ENCODE measurements at regions of chr19 and their contacts with region 1.

Region 1: DNA sequence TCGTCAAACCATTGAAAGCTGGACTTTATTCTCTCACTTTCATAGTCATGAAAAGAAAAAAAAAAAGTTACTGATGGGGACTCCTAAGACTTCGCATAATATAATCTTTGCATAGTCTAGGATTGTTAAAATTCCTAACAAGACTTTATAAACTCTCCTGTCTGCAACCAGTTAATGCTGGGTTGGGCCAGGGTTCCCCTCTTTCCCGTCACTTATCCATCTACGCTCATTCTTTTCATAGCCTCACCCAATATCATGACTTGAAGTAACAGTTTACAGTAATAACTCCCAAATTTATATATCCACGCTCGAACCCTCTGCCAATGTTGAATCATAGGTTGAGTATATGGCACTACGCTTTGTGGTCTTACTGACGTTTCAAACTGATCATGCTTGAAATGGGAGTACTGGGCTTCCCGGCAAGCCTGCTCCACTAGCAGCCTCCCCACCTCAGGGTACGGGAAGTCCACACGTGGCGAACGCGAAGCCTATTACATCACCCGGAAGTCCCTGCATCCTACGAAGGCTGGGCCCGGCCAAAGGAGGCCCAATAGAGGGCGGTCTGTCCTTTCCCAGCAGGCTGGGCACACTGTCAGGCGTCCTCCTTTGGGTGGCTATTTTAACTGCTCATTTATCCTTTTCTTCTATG is 743 bp upstream of the ZNF460 start:
- DNase-seq: peak; percentile 94
- ATAC-seq: peak; percentile 97

Region 2: GRCh38 chr19:57191141-57192076 is 88.1 kb before region 1 on chr19 and contains the start of gene ZNF264:
- intact Hi-C with region 1: loop called (anchors 5 kb)
- DNase-seq: peak; percentile 96
- ATAC-seq: peak; percentile 98
- total RNA-seq, gene ZNF264: 16.5 TPM

Region 3: DNA sequence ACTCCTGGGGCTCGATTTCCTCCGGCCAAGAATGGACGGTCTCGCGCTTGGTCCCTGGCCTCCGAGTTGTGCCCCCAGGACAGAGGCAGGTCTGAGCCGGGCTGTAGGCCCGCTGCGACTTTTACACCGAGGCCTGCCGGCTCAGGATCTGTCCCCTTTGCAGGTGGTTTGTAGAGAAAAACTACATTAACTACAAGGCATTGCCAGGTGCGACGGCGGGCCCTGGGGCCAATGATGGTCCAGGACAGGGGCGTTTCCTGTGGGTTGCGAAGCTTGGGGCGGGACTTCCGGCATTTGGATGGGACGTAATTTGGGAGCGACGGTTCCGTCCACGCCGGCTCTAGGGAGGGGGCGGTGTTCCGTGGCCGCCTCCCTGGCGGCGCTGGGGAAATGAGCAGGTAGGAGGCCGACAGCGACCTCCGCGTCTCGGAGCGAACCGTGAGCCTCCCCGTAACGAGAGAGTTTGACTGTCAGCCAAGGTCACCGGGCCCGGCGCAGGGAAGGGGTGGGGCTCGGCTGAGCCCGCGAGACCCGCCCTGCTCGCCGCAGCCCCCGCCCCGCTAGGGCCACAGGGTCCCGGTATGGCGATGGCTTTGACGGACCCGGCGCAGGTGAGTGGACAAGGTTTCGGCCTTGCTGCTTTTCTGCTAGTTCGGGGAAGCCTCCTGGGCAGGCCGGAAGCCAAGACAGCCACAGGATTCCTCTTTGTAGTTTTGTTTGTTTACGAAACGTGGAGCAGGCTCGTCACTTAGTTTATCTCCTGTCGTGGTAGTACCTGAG is 39.0 kb before region 1 on chr19 and contains the start of gene ZNF805:
- intact Hi-C with region 1: loop called (anchors 1 kb)
- DNase-seq: peak; percentile 97
- ATAC-seq: peak; percentile 100
- total RNA-seq, gene ZNF805: 9.7 TPM

Region 4: DNA sequence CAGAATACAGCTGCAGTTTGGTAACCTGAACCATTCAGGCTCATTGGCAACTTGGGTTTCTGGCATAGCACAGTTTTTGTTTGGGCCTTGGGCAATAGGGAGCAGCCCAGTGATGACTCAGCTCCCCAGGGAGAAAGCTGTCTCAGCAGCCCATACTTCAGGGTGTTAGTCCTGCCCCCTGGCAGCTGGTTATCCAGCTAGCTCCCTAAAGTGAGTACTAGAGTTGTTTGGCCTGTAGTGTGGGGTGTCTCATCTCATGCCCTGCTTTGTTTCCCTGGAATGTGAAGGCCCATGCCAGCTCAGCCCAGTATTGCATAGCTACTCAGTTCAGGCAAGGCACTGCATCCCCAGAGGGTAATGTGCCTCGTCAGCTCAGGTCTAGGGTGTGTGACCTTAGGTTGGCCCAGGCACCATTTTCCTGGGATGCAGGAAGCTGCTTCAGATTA is 22.5 kb after region 1 on chr19:
- intact Hi-C with region 1: no loop called
- DNase-seq: no peak
- ATAC-seq: peak; percentile 28

Region 5: GRCh38 chr19:57320180-57321084 is 40.9 kb after region 1 on chr19 and contains the start of gene ZNF543:
- intact Hi-C with region 1: loop called (anchors 2 kb)
- DNase-seq: peak; percentile 98
- ATAC-seq: peak; percentile 99
- total RNA-seq, gene ZNF543: 5.3 TPM

Region 6: GRCh38 chr19:57362997-57363705 is 83.6 kb after region 1 on chr19 and contains the starts of genes TRAPPC2B and ZNF547:
- intact Hi-C with region 1: loop called (anchors 1 kb)
- DNase-seq: peak; percentile 99
- ATAC-seq: peak; percentile 97
- total RNA-seq, gene TRAPPC2B: 9.7 TPM
- total RNA-seq, gene ZNF547: 2.4 TPM

Region 7: DNA sequence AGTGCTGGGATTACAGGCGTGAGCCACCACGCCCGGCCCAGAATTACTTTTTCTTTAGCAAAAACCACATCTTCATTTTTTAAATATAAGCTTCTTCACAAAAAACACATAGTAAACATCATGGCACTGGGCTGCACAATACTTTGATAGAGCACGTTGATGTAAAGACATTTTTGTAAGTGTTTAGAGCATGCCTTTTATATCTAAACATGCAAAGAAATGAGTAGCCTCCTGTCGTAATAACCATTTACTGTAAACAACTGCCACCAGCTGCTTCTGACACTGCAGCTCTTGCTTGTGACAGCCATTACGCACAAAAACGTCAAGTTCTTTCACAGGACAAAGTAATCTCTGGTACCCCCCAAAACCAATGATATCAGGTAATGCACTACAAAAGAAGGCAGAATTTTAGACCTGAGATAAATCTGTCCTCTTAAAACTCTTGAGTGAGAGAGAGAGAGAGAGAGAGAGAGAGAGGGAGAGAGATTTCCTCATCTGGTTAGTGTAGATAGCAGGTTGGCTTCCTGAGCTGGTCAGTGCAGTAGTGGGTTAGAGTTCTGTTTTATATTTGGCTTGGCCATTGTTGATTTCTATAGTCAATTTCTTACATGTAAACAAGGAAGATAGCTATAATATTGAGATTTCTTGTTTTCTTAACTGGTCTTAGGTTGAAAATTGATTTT is 103.4 kb after region 1 on chr19:
- intact Hi-C with region 1: no loop called
- DNase-seq: no peak
- ATAC-seq: no peak

Measured in Right ventricle myocardium inferior (tissue), 1 donor.